B cell (primary cell): ENCODE measurements at regions of chr16 and their contacts with region 1.

Region 1: GRCh38 chr16:66588981-66589713 is 9.9 kb downstream of the CMTM2 start:
- DNase-seq: peak; percentile 79
- ATAC-seq: peak; percentile 90
- H3K4me3 ChIP-seq: no peak overlapping the region
- H3K4me3 Mint-ChIP-seq: peak overlapping the region; percentile 75
- H3K27ac ChIP-seq: no peak overlapping the region
- H3K27ac Mint-ChIP-seq: peak overlapping the region; percentile 59
- H3K4me1 ChIP-seq: peaks cover 24 to 34% of the 10 kb centered on the region in 2 donors
- H3K4me1 Mint-ChIP-seq: peaks cover 30% of the 10 kb centered on the region
- H3K27me3 ChIP-seq: peaks cover 0 to 20% (median 6%) of the 10 kb centered on the region in 4 experiments
- H3K27me3 Mint-ChIP-seq: peaks cover 9% of the 10 kb centered on the region
- CTCF ChIP-seq: peak; percentile 83

Region 2: GRCh38 chr16:66353997-66354909 is 234.9 kb before region 1 on chr16:
- CTCF ChIA-PET with region 1: no interaction called
- POLR2A ChIA-PET with region 1: no interaction called
- intact Hi-C with region 1: no loop called
- DNase-seq: no peak
- ATAC-seq: no peak
- H3K4me3 ChIP-seq: no peak overlapping the region
- H3K4me3 Mint-ChIP-seq: no peak overlapping the region
- H3K27ac ChIP-seq: no peak overlapping the region
- H3K27ac Mint-ChIP-seq: no peak overlapping the region
- H3K4me1 ChIP-seq: no peaks in the 10 kb centered on the region
- H3K4me1 Mint-ChIP-seq: no peaks in the 10 kb centered on the region
- H3K27me3 ChIP-seq: peaks cover 0 to 22% (median 0%) of the 10 kb centered on the region in 4 experiments
- H3K27me3 Mint-ChIP-seq: peaks cover 26% of the 10 kb centered on the region
- CTCF ChIP-seq: no peak

Region 3: DNA sequence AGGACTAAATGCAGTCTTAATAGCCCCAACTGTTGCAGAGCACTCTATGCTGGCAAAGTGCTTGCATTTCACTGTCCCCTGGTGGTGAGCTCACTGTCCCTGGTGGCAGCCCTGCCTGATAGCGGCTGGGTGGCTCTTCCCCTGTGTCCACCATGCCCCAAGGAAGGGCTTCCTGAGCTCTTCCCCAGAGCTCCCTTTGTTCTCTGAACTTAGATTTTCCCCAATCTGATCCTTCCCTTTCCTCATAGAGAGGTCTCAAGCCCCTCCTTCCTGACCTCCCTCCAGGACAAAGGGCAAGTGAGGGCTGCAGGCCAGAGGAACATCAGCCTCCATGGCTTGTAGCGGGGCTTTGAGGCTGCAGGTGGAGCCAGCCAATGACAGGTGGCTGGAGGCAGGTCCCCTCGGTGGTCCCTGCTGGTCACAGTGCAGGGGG is 145.1 kb before region 1 on chr16:
- CTCF ChIA-PET with region 1: no interaction called
- POLR2A ChIA-PET with region 1: no interaction called
- intact Hi-C with region 1: no loop called
- DNase-seq: no peak
- ATAC-seq: no peak
- H3K4me3 ChIP-seq: no peak overlapping the region
- H3K4me3 Mint-ChIP-seq: no peak overlapping the region
- H3K27ac ChIP-seq: no peak overlapping the region
- H3K27ac Mint-ChIP-seq: no peak overlapping the region
- H3K4me1 ChIP-seq: no peaks in the 10 kb centered on the region
- H3K4me1 Mint-ChIP-seq: no peaks in the 10 kb centered on the region
- H3K27me3 ChIP-seq: peaks cover 0 to 18% (median 8%) of the 10 kb centered on the region in 4 experiments
- H3K27me3 Mint-ChIP-seq: peaks cover 36% of the 10 kb centered on the region
- CTCF ChIP-seq: no peak

Region 4: DNA sequence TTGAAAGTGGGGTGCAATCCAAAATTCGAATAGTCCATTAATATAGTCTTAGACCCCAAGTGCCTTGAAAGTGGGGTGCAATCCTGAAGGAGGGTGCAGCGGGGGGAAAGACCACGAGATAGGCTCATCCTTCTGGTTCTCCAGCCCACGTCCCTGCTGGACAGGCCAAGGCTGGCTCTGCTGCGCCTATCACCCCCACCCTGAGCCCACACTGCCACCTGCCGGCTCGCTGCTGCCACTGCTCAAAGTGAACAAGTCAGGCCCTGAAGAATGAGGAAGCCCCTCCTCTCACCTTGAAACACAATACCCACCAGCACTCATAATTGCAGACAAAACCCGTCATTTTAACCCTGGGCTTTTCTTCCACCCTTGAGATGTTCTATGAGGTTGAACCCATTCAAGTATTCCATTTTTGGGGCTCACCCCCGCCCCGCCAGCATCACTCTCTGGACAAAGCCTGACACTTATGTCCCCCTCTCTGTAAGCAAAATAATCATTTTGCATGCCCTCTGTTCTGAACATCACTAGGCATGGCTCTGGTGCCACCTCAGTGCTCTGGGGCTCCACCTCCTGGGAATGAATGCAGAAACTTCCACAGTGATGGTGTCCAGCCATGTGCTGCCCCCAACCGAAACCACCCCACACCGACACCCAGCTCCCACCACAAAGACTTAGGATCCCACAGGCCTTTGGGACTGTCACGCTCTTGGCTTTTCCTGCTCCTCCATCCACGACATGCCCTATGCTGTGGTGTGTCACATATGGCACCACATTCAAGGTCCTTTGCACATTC is 105.3 kb before region 1 on chr16:
- CTCF ChIA-PET with region 1: interaction called, 91 read pairs
- POLR2A ChIA-PET with region 1: no interaction called
- intact Hi-C with region 1: loop called (anchors 1 kb)
- DNase-seq: peak; percentile 81
- ATAC-seq: peak; percentile 93
- H3K4me3 ChIP-seq: no peak overlapping the region
- H3K4me3 Mint-ChIP-seq: no peak overlapping the region
- H3K27ac ChIP-seq: no peak overlapping the region
- H3K27ac Mint-ChIP-seq: peak overlapping the region; percentile 5
- H3K4me1 ChIP-seq: peaks cover 14 to 20% of the 10 kb centered on the region in 2 donors
- H3K4me1 Mint-ChIP-seq: peaks cover 15% of the 10 kb centered on the region
- H3K27me3 ChIP-seq: peaks cover 0 to 9% (median under 1%) of the 10 kb centered on the region in 4 experiments
- H3K27me3 Mint-ChIP-seq: peaks cover 3% of the 10 kb centered on the region
- CTCF ChIP-seq: peak; percentile 96

Region 5: GRCh38 chr16:66511615-66512500 is 77.3 kb before region 1 on chr16:
- CTCF ChIA-PET with region 1: interaction called, 26 read pairs
- POLR2A ChIA-PET with region 1: no interaction called
- intact Hi-C with region 1: loop called (anchors 1 kb)
- DNase-seq: peak; percentile 34
- ATAC-seq: no peak
- H3K4me3 ChIP-seq: no peak overlapping the region
- H3K4me3 Mint-ChIP-seq: no peak overlapping the region
- H3K27ac ChIP-seq: no peak overlapping the region
- H3K27ac Mint-ChIP-seq: peak overlapping the region; percentile 16
- H3K4me1 ChIP-seq: peaks cover 15 to 29% of the 10 kb centered on the region in 2 donors
- H3K4me1 Mint-ChIP-seq: peaks cover 41% of the 10 kb centered on the region
- H3K27me3 ChIP-seq: peaks cover 0 to 3% (median 0%) of the 10 kb centered on the region in 4 experiments
- H3K27me3 Mint-ChIP-seq: peaks cover 3% of the 10 kb centered on the region
- CTCF ChIP-seq: no peak

Region 6: GRCh38 chr16:66562407-66562806 is 26.7 kb before region 1 on chr16:
- CTCF ChIA-PET with region 1: interaction called, 17 read pairs
- POLR2A ChIA-PET with region 1: no interaction called
- intact Hi-C with region 1: no loop called
- DNase-seq: no peak
- ATAC-seq: no peak
- H3K4me3 ChIP-seq: no peak overlapping the region
- H3K4me3 Mint-ChIP-seq: no peak overlapping the region
- H3K27ac ChIP-seq: no peak overlapping the region
- H3K27ac Mint-ChIP-seq: no peak overlapping the region
- H3K4me1 ChIP-seq: no peaks in the 10 kb centered on the region
- H3K4me1 Mint-ChIP-seq: peaks cover 22% of the 10 kb centered on the region
- H3K27me3 ChIP-seq: no peaks in the 10 kb centered on the region
- H3K27me3 Mint-ChIP-seq: no peaks in the 10 kb centered on the region
- CTCF ChIP-seq: peak; percentile 48

Region 7: GRCh38 chr16:66569827-66570405 is 19.2 kb before region 1 on chr16:
- CTCF ChIA-PET with region 1: interaction called, 21 read pairs
- POLR2A ChIA-PET with region 1: no interaction called
- intact Hi-C with region 1: no loop called
- DNase-seq: no peak
- ATAC-seq: no peak
- H3K4me3 ChIP-seq: no peak overlapping the region
- H3K4me3 Mint-ChIP-seq: no peak overlapping the region
- H3K27ac ChIP-seq: no peak overlapping the region
- H3K27ac Mint-ChIP-seq: no peak overlapping the region
- H3K4me1 ChIP-seq: no peaks in the 10 kb centered on the region
- H3K4me1 Mint-ChIP-seq: no peaks in the 10 kb centered on the region
- H3K27me3 ChIP-seq: no peaks in the 10 kb centered on the region
- H3K27me3 Mint-ChIP-seq: no peaks in the 10 kb centered on the region
- CTCF ChIP-seq: no peak

Region 8: DNA sequence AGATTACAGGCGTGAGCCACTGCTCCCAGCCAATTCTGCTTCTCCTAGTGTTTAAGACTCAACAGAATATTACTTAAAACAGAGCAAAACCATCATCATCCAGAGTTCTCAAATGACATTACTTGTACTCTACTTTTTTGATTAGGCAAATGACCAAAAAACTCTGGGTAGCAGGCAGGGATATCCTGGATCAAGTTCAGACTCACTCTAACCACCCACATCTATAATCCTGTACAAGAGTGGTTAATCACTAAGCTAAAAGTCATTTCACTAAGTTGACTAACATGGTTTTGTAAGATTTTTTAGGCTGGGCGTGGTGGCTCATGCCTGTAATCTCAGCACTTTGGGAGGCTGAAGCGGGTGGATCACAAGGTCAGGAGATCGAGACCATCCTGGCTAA is 234.9 kb after region 1 on chr16:
- CTCF ChIA-PET with region 1: no interaction called
- POLR2A ChIA-PET with region 1: no interaction called
- intact Hi-C with region 1: no loop called
- DNase-seq: no peak
- ATAC-seq: no peak
- H3K4me3 ChIP-seq: no peak overlapping the region
- H3K4me3 Mint-ChIP-seq: no peak overlapping the region
- H3K27ac ChIP-seq: no peak overlapping the region
- H3K27ac Mint-ChIP-seq: no peak overlapping the region
- H3K4me1 ChIP-seq: peaks cover under 1 to 6% of the 10 kb centered on the region in 2 donors
- H3K4me1 Mint-ChIP-seq: peaks cover 13% of the 10 kb centered on the region
- H3K27me3 ChIP-seq: no peaks in the 10 kb centered on the region
- H3K27me3 Mint-ChIP-seq: no peaks in the 10 kb centered on the region
- CTCF ChIP-seq: no peak